ENCODE measurements at regions of chr1 and their contacts with region 1.

Region 1: DNA sequence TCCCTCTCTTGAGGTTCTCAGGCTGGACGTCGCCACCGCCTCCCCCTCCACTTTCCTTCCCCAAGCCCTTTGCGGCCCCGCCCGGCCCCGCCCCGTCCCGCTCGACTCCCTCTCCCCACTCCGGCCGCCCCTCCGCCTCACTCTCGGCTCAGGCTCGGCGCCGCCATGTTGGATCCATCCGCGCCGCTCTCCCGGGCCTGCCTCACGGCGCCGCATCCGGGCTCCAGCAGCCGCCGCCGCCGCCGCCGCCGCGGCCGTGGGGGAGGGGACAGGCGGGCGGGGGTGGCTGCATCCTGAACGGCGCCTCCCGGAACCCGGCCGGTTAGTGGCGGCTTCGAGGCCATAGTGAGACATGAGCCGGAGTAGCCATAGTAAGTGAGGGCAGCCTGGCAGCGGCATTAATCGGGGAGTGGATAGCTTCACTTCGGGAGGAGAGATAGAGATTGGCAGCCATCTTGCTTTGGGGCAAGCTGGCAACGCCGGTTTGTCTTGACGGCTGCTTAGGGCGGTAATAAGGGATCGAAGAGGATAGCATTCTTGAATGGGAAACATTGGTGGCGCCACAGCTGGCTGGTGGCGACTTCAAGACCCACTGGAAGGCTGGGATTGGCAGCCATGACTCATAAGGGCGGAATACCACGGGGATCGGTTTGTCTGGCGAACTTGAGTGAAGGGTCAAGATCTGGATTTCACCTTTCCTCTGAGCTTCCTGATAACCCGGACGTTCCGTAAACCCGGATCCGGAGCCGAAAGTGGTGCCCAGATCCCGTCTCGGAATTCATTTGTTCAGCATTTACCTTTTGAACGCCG is at the start of gene DEDD:
- DNase-seq: peak; percentile 94
- H3K4me3 ChIP-seq: peak within 1 kb of the TSS; percentile 54 to 74
- H3K27ac ChIP-seq: peak within 1 kb of the TSS; percentile 91 to 96
- H3K4me1 ChIP-seq: peaks cover 5 to 13% of the 10 kb centered on the region in 2 experiments; a peak in 3 of 4 replicates
- H3K27me3 ChIP-seq: no peaks in the 10 kb centered on the region
- CTCF ChIP-seq: no peak
- EP300 ChIP-seq: peak in 1 of 2 experiments; percentile 44; a peak in 1 of 4 replicates
- RAD21 ChIP-seq: no peak
- polyA plus RNA-seq, gene DEDD: 43.1 and 45.0 TPM in 2 replicates

Region 2: GRCh38 chr1:160911441-160911840 is 221.2 kb before region 1 on chr1:
- CTCF ChIA-PET with region 1: no interaction called
- POLR2A ChIA-PET with region 1: no interaction called
- DNase-seq: no peak
- H3K4me3 ChIP-seq: no peak overlapping the region
- H3K27ac ChIP-seq: no peak overlapping the region
- H3K4me1 ChIP-seq: no peaks in the 10 kb centered on the region
- H3K27me3 ChIP-seq: peaks cover 29% of the 10 kb centered on the region; the same call in 1 of the 2 replicates
- CTCF ChIP-seq: no peak
- EP300 ChIP-seq: no peak
- RAD21 ChIP-seq: no peak

Region 3: GRCh38 chr1:161045750-161046571 is 86.7 kb before region 1 on chr1 and contains the start of gene USF1:
- CTCF ChIA-PET with region 1: interaction called, 3 read pairs
- POLR2A ChIA-PET with region 1: interaction called, 10 read pairs
- DNase-seq: peak; percentile 93
- H3K4me3 ChIP-seq: peak within 1 kb of the TSS; percentile 69 to 75
- H3K27ac ChIP-seq: peak within 1 kb of the TSS; percentile 93 to 99
- H3K4me1 ChIP-seq: peaks cover 0 to 7% of the 10 kb centered on the region in 2 experiments; a peak in 2 of 4 replicates
- H3K27me3 ChIP-seq: no peaks in the 10 kb centered on the region
- CTCF ChIP-seq: no peak
- EP300 ChIP-seq: no peak
- RAD21 ChIP-seq: no peak
- polyA plus RNA-seq, gene USF1: 43.1 and 61.9 TPM in 2 replicates

Region 4: GRCh38 chr1:161153679-161154426 is 21.2 kb after region 1 on chr1 and contains the start of gene UFC1:
- CTCF ChIA-PET with region 1: interaction called, 6 read pairs
- POLR2A ChIA-PET with region 1: interaction called, 12 read pairs
- DNase-seq: peak; percentile 79
- H3K4me3 ChIP-seq: peak within 1 kb of the TSS; percentile 61 to 98
- H3K27ac ChIP-seq: peak within 1 kb of the TSS; percentile 97
- H3K4me1 ChIP-seq: peaks cover 0 to 10% of the 10 kb centered on the region in 2 experiments; a peak in 3 of 4 replicates
- H3K27me3 ChIP-seq: no peaks in the 10 kb centered on the region
- CTCF ChIP-seq: no peak
- EP300 ChIP-seq: 0 out of 4 replicates have a peak, but pooled peaks of 1 of the 2 experiments have one; percentile 9
- RAD21 ChIP-seq: no peak
- polyA plus RNA-seq, gene UFC1: 150 and 201 TPM in 2 replicates